PC-3 (cell line): ENCODE measurements at regions of chr1 and their contacts with region 1.

Region 1: GRCh38 chr1:206912445-206913095 is 9.2 kb downstream of the FCMR start:
- DNase-seq: peak; percentile 98
- ATAC-seq: peak; percentile 32
- H3K4me3 ChIP-seq: no peak overlapping the region
- H3K27ac ChIP-seq: peak overlapping the region; percentile 13
- H3K4me1 ChIP-seq: peaks cover 37% of the 10 kb centered on the region
- H3K27me3 ChIP-seq: no peaks in the 10 kb centered on the region
- CTCF ChIP-seq: peak; percentile 99

Region 2: GRCh38 chr1:206612129-206612876 is 300.3 kb before region 1 on chr1 and contains the start of gene EIF2D:
- CTCF ChIA-PET with region 1: no interaction called
- POLR2A ChIA-PET with region 1: interaction called, 5 read pairs
- intact Hi-C with region 1: loop called (anchors 5 kb)
- DNase-seq: peak; percentile 99
- ATAC-seq: peak; percentile 94
- H3K4me3 ChIP-seq: peak within 1 kb of the TSS; percentile 87
- H3K27ac ChIP-seq: peak within 1 kb of the TSS; percentile 53
- H3K4me1 ChIP-seq: peaks cover 7% of the 10 kb centered on the region
- H3K27me3 ChIP-seq: no peaks in the 10 kb centered on the region
- CTCF ChIP-seq: peak; percentile 98
- total RNA-seq, gene EIF2D: 107 and 110 TPM in 2 replicates

Region 3: DNA sequence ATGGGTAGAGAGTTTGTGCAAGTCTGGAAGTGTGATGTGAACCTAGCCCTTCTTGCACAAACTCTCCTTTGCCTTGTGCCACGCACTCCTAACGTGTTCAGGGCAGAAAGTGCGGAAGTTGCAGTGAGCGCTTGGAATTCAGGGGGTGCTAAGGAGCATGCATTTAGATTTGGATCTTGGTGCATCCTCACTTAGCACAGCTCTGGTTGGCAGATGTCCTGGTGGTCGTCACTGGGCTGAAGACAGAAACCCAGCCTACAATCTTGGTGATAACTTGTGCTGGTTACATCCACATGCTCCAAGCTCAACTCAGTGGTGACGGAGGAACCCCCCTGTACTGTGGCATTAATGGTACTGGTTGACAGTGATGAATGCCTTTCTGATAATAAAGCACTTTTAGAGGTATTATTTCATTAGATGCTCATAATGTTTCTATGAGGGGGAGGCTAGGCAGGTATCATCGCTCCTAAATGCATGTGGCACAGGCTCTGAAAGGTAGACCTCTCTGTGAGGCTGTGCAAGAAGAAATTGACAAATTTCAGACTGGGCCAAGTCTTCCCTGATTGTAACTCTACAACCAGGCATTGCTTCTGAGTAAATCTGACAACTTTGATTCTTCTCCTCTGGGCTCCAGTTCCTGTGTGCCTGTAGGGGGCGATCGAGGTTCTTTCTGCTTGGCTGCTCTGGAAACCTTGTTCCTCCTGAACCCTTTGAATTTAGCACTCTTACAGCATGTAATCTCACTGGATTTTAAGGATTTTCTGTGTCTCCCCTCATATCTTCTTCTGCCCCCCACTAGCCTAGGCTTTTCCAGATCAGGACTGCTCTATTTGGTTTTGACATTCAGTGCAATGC is 187.2 kb before region 1 on chr1:
- CTCF ChIA-PET with region 1: interaction called, 7 read pairs
- POLR2A ChIA-PET with region 1: no interaction called
- intact Hi-C with region 1: loop called (anchors 1 kb)
- DNase-seq: peak; percentile 69
- ATAC-seq: peak; percentile 47
- H3K4me3 ChIP-seq: no peak overlapping the region
- H3K27ac ChIP-seq: no peak overlapping the region; the same call in 1 of the 2 replicates
- H3K4me1 ChIP-seq: peaks cover 29% of the 10 kb centered on the region
- H3K27me3 ChIP-seq: no peaks in the 10 kb centered on the region
- CTCF ChIP-seq: peak; percentile 89

Region 4: GRCh38 chr1:206808615-206809014 is 104.0 kb before region 1 on chr1:
- CTCF ChIA-PET with region 1: interaction called, 54 read pairs
- POLR2A ChIA-PET with region 1: interaction called, 3 read pairs
- intact Hi-C with region 1: loop called (anchors 1 kb)
- DNase-seq: peak; percentile 72
- ATAC-seq: peak; percentile 72
- H3K4me3 ChIP-seq: no peak overlapping the region
- H3K27ac ChIP-seq: no peak overlapping the region
- H3K4me1 ChIP-seq: peaks cover 8% of the 10 kb centered on the region; the same call in 1 of the 2 replicates
- H3K27me3 ChIP-seq: peaks cover 13% of the 10 kb centered on the region
- CTCF ChIP-seq: peak; percentile 75

Region 5: DNA sequence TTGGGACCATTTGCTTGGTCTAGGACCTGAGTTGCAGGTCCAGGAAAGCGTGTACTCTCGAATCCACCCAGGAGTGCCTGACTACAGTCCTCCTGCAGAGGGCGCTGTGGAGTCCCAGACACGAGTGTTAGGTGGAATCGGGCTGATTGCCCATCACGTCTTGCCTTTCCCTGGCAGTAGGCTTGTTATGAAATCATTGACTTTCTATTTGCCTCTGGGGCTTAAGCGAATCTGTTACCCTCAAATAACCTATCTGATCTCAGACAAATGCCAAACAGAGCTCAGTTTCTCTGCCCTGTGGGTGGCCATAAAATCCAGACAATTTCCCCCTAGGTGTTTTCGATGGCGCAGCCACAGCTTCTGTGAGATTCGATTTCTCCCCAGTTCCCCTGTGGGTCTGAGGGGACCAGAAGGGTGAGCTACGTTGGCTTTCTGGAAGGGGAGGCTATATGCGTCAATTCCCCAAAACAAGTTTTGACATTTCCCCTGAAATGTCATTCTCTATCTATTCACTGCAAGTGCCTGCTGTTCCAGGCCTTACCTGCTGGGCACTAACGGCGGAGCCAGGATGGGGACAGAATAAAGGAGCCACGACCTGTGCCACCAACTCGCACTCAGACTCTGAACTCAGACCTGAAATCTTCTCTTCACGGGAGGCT is 47.4 kb before region 1 on chr1 and contains the start of gene IL20:
- CTCF ChIA-PET with region 1: interaction called, 9 read pairs
- POLR2A ChIA-PET with region 1: interaction called, 4 read pairs
- intact Hi-C with region 1: loop called (anchors 1 kb)
- DNase-seq: peak; percentile 98
- ATAC-seq: peak; percentile 81
- H3K4me3 ChIP-seq: no peak within 1 kb of the TSS
- H3K27ac ChIP-seq: no peak within 1 kb of the TSS
- H3K4me1 ChIP-seq: no peaks in the 10 kb centered on the region
- H3K27me3 ChIP-seq: peaks cover 8% of the 10 kb centered on the region; the same call in 1 of the 2 replicates
- CTCF ChIP-seq: peak; percentile 100
- total RNA-seq, gene IL20: not detected in 2 replicates

Region 6: GRCh38 chr1:206895830-206896242 is 16.7 kb before region 1 on chr1:
- CTCF ChIA-PET with region 1: interaction called, 16 read pairs
- POLR2A ChIA-PET with region 1: interaction called, 21 read pairs
- intact Hi-C with region 1: no loop called
- DNase-seq: peak; percentile 84
- ATAC-seq: peak; percentile 69
- H3K4me3 ChIP-seq: peak overlapping the region; percentile 15; the same call in 1 of the 2 replicates
- H3K27ac ChIP-seq: peak overlapping the region; percentile 93
- H3K4me1 ChIP-seq: peaks cover 74% of the 10 kb centered on the region
- H3K27me3 ChIP-seq: no peaks in the 10 kb centered on the region
- CTCF ChIP-seq: no peak

Region 7: DNA sequence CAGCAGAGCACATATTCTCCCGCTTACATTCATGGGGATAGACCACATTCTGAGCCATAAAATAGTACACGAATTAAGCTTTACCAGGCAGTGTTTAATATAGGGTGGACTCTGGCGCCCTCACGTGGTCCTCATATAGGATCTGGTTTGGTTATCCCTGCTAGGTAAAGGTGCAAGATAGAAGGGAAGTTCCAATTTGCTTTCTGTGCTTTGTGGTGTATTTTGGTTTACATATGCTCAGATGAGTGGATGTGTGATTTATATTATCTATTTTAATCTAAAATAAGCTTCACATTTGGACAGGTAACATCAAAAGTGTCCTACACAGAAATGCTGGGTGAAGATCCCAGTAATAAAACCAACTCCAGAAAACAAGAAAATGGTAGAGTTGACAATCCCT is 587.0 kb after region 1 on chr1:
- CTCF ChIA-PET with region 1: interaction called, 4 read pairs
- POLR2A ChIA-PET with region 1: no interaction called
- intact Hi-C with region 1: loop called (anchors 2 kb)
- DNase-seq: peak; percentile 90
- ATAC-seq: peak; percentile 99
- H3K4me3 ChIP-seq: no peak overlapping the region
- H3K27ac ChIP-seq: no peak overlapping the region
- H3K4me1 ChIP-seq: no peaks in the 10 kb centered on the region
- H3K27me3 ChIP-seq: peaks cover 80% of the 10 kb centered on the region
- CTCF ChIP-seq: peak; percentile 99